HCT116 (cell line): ENCODE measurements at regions of chr10 and their contacts with region 1.

Region 1: DNA sequence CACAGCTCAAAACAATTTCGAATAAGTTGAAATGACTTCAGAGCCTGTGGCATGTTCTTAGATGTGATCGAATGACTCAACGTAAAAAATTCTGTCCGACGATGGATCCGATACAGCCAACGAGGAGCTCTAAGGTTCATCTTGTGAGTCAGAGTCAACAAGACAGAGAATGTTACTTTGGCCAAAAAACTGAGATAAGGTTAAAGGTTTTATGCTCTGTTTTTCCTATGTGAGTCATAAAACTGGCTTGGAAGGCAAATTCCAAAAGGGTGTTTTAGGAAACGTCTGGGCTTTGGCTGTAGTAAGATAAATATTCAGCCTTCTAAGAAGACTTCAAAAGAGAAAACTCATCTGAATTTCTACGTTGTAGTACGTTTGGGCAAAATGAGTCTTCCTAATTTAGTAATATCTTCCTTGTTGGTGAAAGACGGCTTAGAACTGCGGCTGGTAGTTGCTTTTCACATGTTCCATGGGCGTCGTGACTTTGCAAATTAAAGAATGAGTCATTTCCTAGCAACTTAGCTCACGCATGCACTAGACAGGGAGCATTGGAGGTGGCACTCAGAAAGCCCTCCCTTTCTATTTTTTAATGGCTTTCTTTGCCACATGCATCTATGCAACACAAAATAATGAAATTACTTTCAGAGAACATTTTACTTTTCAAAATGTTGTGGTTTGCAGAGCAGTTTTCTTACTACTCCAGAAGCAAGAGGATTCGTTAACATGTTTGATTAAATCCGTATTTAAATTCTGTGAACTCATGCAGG is 28.2 kb downstream of the PFKP start:
- DNase-seq: peak; percentile 97
- ATAC-seq: peak; percentile 71
- H3K4me3 ChIP-seq: peak overlapping the region in 1 of 2 experiments; percentile 15; a peak in 3 of 4 replicates
- H3K27ac ChIP-seq: peak overlapping the region; percentile 90
- H3K4me1 ChIP-seq: peaks cover 59 to 70% of the 10 kb centered on the region in 2 experiments
- H3K27me3 ChIP-seq: no peaks in the 10 kb centered on the region
- CTCF ChIP-seq: no peak
- POLR2A ChIP-seq: no peak
- RAD21 ChIP-seq: peak; percentile 24; the same call in 1 of the 2 replicates

Region 2: GRCh38 chr10:3071405-3072198 is 24.0 kb before region 1 on chr10:
- CTCF ChIA-PET with region 1: interaction called, 3 read pairs
- POLR2A ChIA-PET with region 1: interaction called, 4 read pairs
- RAD21 ChIA-PET with region 1: interaction called, 3 to 5 read pairs
- intact Hi-C with region 1: loop called (anchors 1 kb)
- DNase-seq: peak; percentile 91
- ATAC-seq: peak; percentile 72
- H3K4me3 ChIP-seq: 0 out of 4 replicates have a peak overlapping the region, but pooled peaks of 1 of the 2 experiments have one; percentile 4
- H3K27ac ChIP-seq: peak overlapping the region; percentile 61
- H3K4me1 ChIP-seq: peaks cover 33 to 75% of the 10 kb centered on the region in 2 experiments
- H3K27me3 ChIP-seq: no peaks in the 10 kb centered on the region
- CTCF ChIP-seq: no peak
- POLR2A ChIP-seq: no peak
- RAD21 ChIP-seq: peak; percentile 15; the same call in 1 of the 2 replicates

Region 3: DNA sequence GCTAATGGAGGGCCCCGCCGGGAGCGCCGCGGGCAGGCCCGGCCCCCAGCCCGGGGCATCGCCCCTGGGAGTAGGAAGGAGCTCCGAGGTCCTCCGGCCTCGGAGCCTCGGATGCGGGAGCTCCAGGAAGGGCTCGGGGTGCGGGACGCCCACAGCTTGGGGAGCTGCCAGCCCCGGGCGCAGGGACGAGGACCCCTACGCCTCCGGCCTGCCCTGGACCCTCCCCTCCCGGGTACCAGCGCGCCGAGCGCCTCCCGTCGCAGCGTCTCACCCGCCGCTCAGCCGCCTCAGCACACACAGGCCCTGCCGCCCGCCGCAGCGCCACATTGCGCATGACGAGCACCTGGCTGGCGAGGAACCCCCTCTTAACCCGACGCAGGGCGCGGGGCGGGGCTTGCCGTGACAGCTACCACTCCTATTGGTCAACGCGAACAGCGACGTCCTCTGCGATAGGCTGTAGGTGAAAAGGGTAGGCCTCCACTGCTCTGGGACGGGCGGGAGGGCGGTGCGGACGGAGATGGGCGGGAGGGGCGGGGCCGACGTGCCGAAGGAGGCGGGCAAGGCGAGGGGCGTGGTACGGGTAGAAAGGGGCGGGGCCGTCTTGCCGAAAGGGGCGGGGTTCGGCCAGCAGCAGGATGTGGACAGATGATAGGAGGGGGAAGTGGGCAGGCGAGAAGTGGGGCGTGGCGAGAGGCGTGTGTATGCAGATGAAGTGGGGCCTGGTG is 77.1 kb after region 1 on chr10 and contains the start of gene PITRM1:
- CTCF ChIA-PET with region 1: no interaction called
- POLR2A ChIA-PET with region 1: interaction called, 3 read pairs
- RAD21 ChIA-PET with region 1: no interaction called
- intact Hi-C with region 1: loop called (anchors 1 kb)
- DNase-seq: peak; percentile 96
- ATAC-seq: peak; percentile 90
- H3K4me3 ChIP-seq: peak within 1 kb of the TSS; percentile 76 to 79
- H3K27ac ChIP-seq: peak within 1 kb of the TSS; percentile 76
- H3K4me1 ChIP-seq: peaks cover 0 to 22% of the 10 kb centered on the region in 2 experiments; a peak in 3 of 4 replicates
- H3K27me3 ChIP-seq: no peaks in the 10 kb centered on the region
- CTCF ChIP-seq: no peak
- POLR2A ChIP-seq: peak; percentile 97
- RAD21 ChIP-seq: no peak
- total RNA-seq, gene PITRM1: 59.5 TPM

Region 4: GRCh38 chr10:3538658-3539531 is 443.3 kb after region 1 on chr10:
- CTCF ChIA-PET with region 1: no interaction called
- POLR2A ChIA-PET with region 1: no interaction called
- RAD21 ChIA-PET with region 1: no interaction called
- intact Hi-C with region 1: no loop called
- DNase-seq: no peak
- ATAC-seq: no peak
- H3K4me3 ChIP-seq: no peak overlapping the region
- H3K27ac ChIP-seq: no peak overlapping the region
- H3K4me1 ChIP-seq: peaks cover 0 to 8% of the 10 kb centered on the region in 2 experiments; a peak in 3 of 4 replicates
- H3K27me3 ChIP-seq: no peaks in the 10 kb centered on the region
- CTCF ChIP-seq: no peak
- POLR2A ChIP-seq: no peak
- RAD21 ChIP-seq: no peak